CD14-positive monocyte (primary cell): ENCODE measurements at regions of chr4 and their contacts with region 1.

Region 1: GRCh38 chr4:39458505-39459300 is at the starts of genes LIAS and RPL9:
- DNase-seq: peak; percentile 99
- H3K4me3 ChIP-seq: peak within 1 kb of the TSS; percentile 84 to 99 (median 92)
- H3K4me3 Mint-ChIP-seq: peak within 1 kb of the TSS; percentile 94 to 97
- H3K27ac ChIP-seq: peak within 1 kb of the TSS; percentile 99 to 100
- H3K27ac Mint-ChIP-seq: peak within 1 kb of the TSS; percentile 99 to 100 (median 100)
- H3K4me1 ChIP-seq: peaks cover 15 to 24% of the 10 kb centered on the region in 2 donors
- H3K4me1 Mint-ChIP-seq: peaks cover 27% of the 10 kb centered on the region
- H3K27me3 ChIP-seq: no peaks in the 10 kb centered on the region
- H3K27me3 Mint-ChIP-seq: no peaks in the 10 kb centered on the region
- CTCF ChIP-seq: no peak
- polyA plus RNA-seq, gene LIAS: 7.2 to 8.9 (median 7.8) TPM
- polyA plus RNA-seq, gene RPL9: 821 to 1,937 (median 828) TPM

Region 2: DNA sequence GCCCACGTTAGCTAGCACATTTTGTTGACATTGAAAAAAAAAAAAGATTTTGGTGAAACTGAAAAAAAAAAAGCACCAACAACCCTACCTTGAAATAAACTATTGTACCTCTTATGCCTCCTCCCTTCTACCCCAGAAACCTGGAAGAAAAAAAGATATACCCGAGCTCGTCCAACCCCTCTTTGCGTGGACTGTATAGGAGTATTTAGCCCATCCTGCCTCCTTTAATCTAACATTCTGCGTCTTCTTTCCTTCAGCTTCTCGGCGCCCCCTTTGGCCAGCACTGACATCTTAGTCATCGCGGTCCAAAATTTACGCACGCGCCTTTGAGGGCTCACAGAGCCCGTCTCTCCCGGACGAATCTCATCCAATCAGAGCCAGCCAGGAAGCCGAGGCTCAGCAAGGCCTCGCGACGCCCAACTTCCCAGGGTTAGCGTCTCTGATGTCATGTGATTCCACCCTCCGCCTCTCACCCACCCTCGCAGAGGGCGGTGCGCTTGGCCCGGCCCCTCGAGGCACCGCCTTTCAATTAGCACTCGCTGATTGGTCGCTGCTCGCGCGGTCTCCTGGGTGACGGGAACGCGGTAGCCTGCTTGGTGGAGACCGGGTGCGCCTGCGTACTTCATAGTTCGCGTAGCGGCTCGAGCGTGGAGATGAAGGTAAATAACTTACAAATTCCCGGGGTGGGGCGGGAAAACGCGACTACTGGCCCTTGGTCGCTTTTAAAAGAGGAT is 276.6 kb before region 1 on chr4 and contains the start of gene WDR19:
- intact Hi-C with region 1: loop called in 1 of 2 experiments (anchors 10 kb)
- DNase-seq: peak; percentile 99
- H3K4me3 ChIP-seq: peak within 1 kb of the TSS; percentile 85 to 93 (median 86)
- H3K4me3 Mint-ChIP-seq: no peak within 1 kb of the TSS
- H3K27ac ChIP-seq: peak within 1 kb of the TSS in 1 of 2 donors; percentile 73
- H3K27ac Mint-ChIP-seq: peak within 1 kb of the TSS in 2 of 7 donors; percentile 55 to 61
- H3K4me1 ChIP-seq: peaks cover 13 to 16% of the 10 kb centered on the region in 2 donors
- H3K4me1 Mint-ChIP-seq: peaks cover 8% of the 10 kb centered on the region
- H3K27me3 ChIP-seq: peaks cover 2 to 3% of the 10 kb centered on the region in 2 donors
- H3K27me3 Mint-ChIP-seq: peaks cover 3 to 12% (median 7%) of the 10 kb centered on the region in 3 donors
- CTCF ChIP-seq: peak; percentile 46
- polyA plus RNA-seq, gene WDR19: 1.7 to 11.4 (median 2.0) TPM

Region 3: DNA sequence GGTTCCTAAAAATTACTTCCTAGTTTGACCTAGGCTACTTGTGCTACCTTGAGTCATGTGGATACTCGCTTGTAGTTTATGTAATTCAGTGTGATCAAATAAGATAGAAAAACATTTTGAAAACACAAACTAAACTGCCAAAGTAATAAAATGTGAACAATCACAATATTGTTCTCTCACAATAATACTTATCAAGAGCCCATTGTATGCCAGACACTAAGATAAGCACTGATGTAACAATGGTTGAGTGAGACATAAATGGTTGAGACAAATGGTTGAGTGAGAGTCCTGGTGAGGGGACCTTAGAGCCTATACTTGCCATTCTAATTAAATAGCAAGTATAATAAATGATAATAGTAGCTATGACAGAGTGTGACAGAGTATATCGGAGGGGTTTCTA is 134.3 kb before region 1 on chr4:
- intact Hi-C with region 1: no loop called
- DNase-seq: no peak
- H3K4me3 ChIP-seq: no peak overlapping the region
- H3K4me3 Mint-ChIP-seq: no peak overlapping the region
- H3K27ac ChIP-seq: no peak overlapping the region
- H3K27ac Mint-ChIP-seq: no peak overlapping the region
- H3K4me1 ChIP-seq: no peaks in the 10 kb centered on the region
- H3K4me1 Mint-ChIP-seq: no peaks in the 10 kb centered on the region
- H3K27me3 ChIP-seq: no peaks in the 10 kb centered on the region
- H3K27me3 Mint-ChIP-seq: no peaks in the 10 kb centered on the region
- CTCF ChIP-seq: no peak

Region 4: GRCh38 chr4:39365830-39366771 is 92.6 kb before region 1 on chr4 and contains the start of gene RFC1:
- intact Hi-C with region 1: loop called in 1 of 2 experiments (anchors 2 kb)
- DNase-seq: peak; percentile 88 to 89 (median 89)
- H3K4me3 ChIP-seq: peak within 1 kb of the TSS; percentile 66 to 99 (median 97)
- H3K4me3 Mint-ChIP-seq: peak within 1 kb of the TSS; percentile 90 to 95
- H3K27ac ChIP-seq: peak within 1 kb of the TSS; percentile 67 to 93
- H3K27ac Mint-ChIP-seq: peak within 1 kb of the TSS; percentile 88 to 97 (median 93)
- H3K4me1 ChIP-seq: peaks cover 12 to 17% of the 10 kb centered on the region in 2 donors
- H3K4me1 Mint-ChIP-seq: peaks cover 21% of the 10 kb centered on the region
- H3K27me3 ChIP-seq: no peaks in the 10 kb centered on the region
- H3K27me3 Mint-ChIP-seq: peaks cover 0 to 2% (median 0%) of the 10 kb centered on the region in 3 donors
- CTCF ChIP-seq: no peak
- polyA plus RNA-seq, gene RFC1: 8.7 to 15.0 (median 14.6) TPM

Region 5: GRCh38 chr4:39527273-39528060 is 68.8 kb after region 1 on chr4 and contains the start of gene UGDH:
- intact Hi-C with region 1: loop called (anchors 5 to 10 kb)
- DNase-seq: peak; percentile 85 to 91 (median 88)
- H3K4me3 ChIP-seq: peak within 1 kb of the TSS; percentile 71 to 83 (median 83)
- H3K4me3 Mint-ChIP-seq: peak within 1 kb of the TSS; percentile 99 to 100
- H3K27ac ChIP-seq: peak within 1 kb of the TSS; percentile 24 to 90
- H3K27ac Mint-ChIP-seq: peak within 1 kb of the TSS; percentile 66 to 96 (median 88)
- H3K4me1 ChIP-seq: peaks cover 17 to 19% of the 10 kb centered on the region in 2 donors
- H3K4me1 Mint-ChIP-seq: peaks cover 22% of the 10 kb centered on the region
- H3K27me3 ChIP-seq: no peaks in the 10 kb centered on the region
- H3K27me3 Mint-ChIP-seq: peaks cover 0 to 2% (median 0%) of the 10 kb centered on the region in 3 donors
- CTCF ChIP-seq: no peak
- polyA plus RNA-seq, gene UGDH: 4.6 to 19.7 (median 16.7) TPM

Region 6: GRCh38 chr4:39638354-39639240 is 179.9 kb after region 1 on chr4 and contains the start of gene SMIM14:
- intact Hi-C with region 1: loop called (anchors 2 kb)
- DNase-seq: peak; percentile 98 to 99 (median 98)
- H3K4me3 ChIP-seq: peak within 1 kb of the TSS; percentile 78 to 98 (median 93)
- H3K4me3 Mint-ChIP-seq: peak within 1 kb of the TSS; percentile 93 to 97
- H3K27ac ChIP-seq: peak within 1 kb of the TSS; percentile 95 to 96
- H3K27ac Mint-ChIP-seq: peak within 1 kb of the TSS; percentile 97 to 99 (median 98)
- H3K4me1 ChIP-seq: peaks cover 18 to 25% of the 10 kb centered on the region in 2 donors
- H3K4me1 Mint-ChIP-seq: peaks cover 27% of the 10 kb centered on the region
- H3K27me3 ChIP-seq: no peaks in the 10 kb centered on the region
- H3K27me3 Mint-ChIP-seq: no peaks in the 10 kb centered on the region
- CTCF ChIP-seq: no peak
- polyA plus RNA-seq, gene SMIM14: 13.6 to 152 (median 140) TPM

Region 7: GRCh38 chr4:39697740-39698423 is 239.2 kb after region 1 on chr4 and contains the start of gene UBE2K:
- intact Hi-C with region 1: loop called in 1 of 2 experiments (anchors 10 kb)
- DNase-seq: peak; percentile 80 to 82 (median 81)
- H3K4me3 ChIP-seq: peak within 1 kb of the TSS; percentile 73 to 99 (median 98)
- H3K4me3 Mint-ChIP-seq: peak within 1 kb of the TSS; percentile 96 to 99
- H3K27ac ChIP-seq: peak within 1 kb of the TSS; percentile 84 to 93
- H3K27ac Mint-ChIP-seq: peak within 1 kb of the TSS; percentile 93 to 98 (median 96)
- H3K4me1 ChIP-seq: peaks cover 21 to 34% of the 10 kb centered on the region in 2 donors
- H3K4me1 Mint-ChIP-seq: peaks cover 30% of the 10 kb centered on the region
- H3K27me3 ChIP-seq: no peaks in the 10 kb centered on the region
- H3K27me3 Mint-ChIP-seq: peaks cover 0 to 2% (median 0%) of the 10 kb centered on the region in 3 donors
- CTCF ChIP-seq: no peak
- polyA plus RNA-seq, gene UBE2K: 24.2 to 66.8 (median 50.0) TPM

Region 8: GRCh38 chr4:39977489-39978377 is 519.0 kb after region 1 on chr4 and contains the start of gene PDS5A:
- intact Hi-C with region 1: loop called (anchors 5 kb)
- DNase-seq: peak; percentile 81 to 88 (median 82)
- H3K4me3 ChIP-seq: peak within 1 kb of the TSS; percentile 76 to 92 (median 89)
- H3K4me3 Mint-ChIP-seq: peak within 1 kb of the TSS; percentile 82 to 94
- H3K27ac ChIP-seq: peak within 1 kb of the TSS; percentile 61 to 83
- H3K27ac Mint-ChIP-seq: peak within 1 kb of the TSS; percentile 81 to 93 (median 87)
- H3K4me1 ChIP-seq: peaks cover 8 to 20% of the 10 kb centered on the region in 2 donors
- H3K4me1 Mint-ChIP-seq: peaks cover 13% of the 10 kb centered on the region
- H3K27me3 ChIP-seq: no peaks in the 10 kb centered on the region
- H3K27me3 Mint-ChIP-seq: peaks cover 1 to 2% (median 1%) of the 10 kb centered on the region in 3 donors
- CTCF ChIP-seq: peak; percentile 84
- polyA plus RNA-seq, gene PDS5A: 14.2 to 19.4 (median 17.7) TPM